ENCODE measurements at regions of chr19 and their contacts with region 1.

Region 1: DNA sequence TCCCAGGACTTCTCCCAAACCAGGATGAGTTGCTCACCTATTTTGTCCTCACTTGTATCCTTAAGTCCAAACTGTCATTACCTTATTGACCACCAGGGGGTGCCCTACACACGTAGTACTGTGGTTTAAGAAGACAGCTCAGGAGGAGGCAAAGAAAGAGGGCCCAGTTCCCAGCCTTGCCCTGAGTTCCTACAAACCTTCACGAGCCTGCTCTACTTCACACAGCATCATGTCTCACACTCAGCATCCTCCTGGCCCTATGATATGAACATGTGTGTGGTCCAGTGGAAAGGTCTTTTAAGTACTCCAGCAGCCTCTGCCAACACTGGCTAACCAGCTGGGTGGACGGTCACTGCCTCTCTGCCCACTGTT is 8.1 kb upstream of the ZNF784 start:
- DNase-seq: peak; percentile 62 to 95 (median 87)
- ATAC-seq: peak; percentile 43
- H3K4me3 ChIP-seq: no peak overlapping the region
- H3K4me3 Mint-ChIP-seq: peak overlapping the region; percentile 83
- H3K27ac ChIP-seq: no peak overlapping the region
- H3K27ac Mint-ChIP-seq: peak overlapping the region; percentile 55
- H3K4me1 ChIP-seq: peaks cover 49% of the 10 kb centered on the region
- H3K4me1 Mint-ChIP-seq: peaks cover 45% of the 10 kb centered on the region
- H3K27me3 ChIP-seq: no peaks in the 10 kb centered on the region
- H3K27me3 Mint-ChIP-seq: no peaks in the 10 kb centered on the region
- CTCF ChIP-seq: peak; percentile 65

Region 2: DNA sequence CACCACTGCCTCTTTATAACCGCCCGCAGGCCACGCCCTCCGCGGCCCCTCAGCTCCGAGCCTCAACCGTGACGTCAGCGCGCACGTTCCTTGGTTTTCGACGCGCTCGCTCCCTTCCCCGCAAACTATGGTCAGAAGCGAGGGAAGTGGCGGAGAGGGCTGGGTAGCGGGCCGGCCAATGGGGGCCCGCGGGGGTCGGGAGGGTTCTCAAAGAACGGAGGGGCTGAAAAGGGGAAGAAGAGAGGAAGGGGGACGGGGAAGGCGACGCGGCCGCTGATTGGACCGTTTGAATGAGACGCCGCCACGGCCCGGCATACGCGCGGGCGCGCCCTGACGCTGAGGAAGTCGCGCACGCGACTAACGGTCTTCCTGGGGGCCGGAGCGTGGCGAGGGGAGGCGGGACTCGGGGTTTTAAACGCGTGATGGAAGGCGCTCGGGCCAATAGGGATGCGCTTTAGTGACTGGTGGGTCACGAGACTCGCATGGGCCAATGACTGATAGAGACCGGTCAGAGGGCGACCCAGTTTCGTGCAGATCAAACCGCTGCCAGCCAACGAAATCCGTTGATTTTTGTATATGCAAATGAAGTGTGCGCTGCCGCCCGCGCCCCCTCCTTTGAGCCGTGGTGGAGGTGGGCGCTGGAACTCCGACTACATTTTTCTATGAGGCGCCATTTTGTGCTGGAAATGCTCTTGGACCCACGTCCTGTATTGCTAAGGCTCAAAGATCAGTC is 224.5 kb before region 1 on chr19:
- CTCF ChIA-PET with region 1: no interaction called
- POLR2A ChIA-PET with region 1: no interaction called
- intact Hi-C with region 1: loop called in 1 of 2 experiments (anchors 10 kb)
- DNase-seq: peak; percentile 91 to 99 (median 96)
- ATAC-seq: peak; percentile 92
- H3K4me3 ChIP-seq: peak overlapping the region; percentile 61
- H3K4me3 Mint-ChIP-seq: peak overlapping the region; percentile 94
- H3K27ac ChIP-seq: peak overlapping the region; percentile 96 to 100
- H3K27ac Mint-ChIP-seq: peak overlapping the region; percentile 99
- H3K4me1 ChIP-seq: peaks cover 30% of the 10 kb centered on the region
- H3K4me1 Mint-ChIP-seq: peaks cover 29% of the 10 kb centered on the region
- H3K27me3 ChIP-seq: no peaks in the 10 kb centered on the region
- H3K27me3 Mint-ChIP-seq: no peaks in the 10 kb centered on the region
- CTCF ChIP-seq: no peak

Region 3: GRCh38 chr19:55503502-55504251 is 128.8 kb before region 1 on chr19:
- CTCF ChIA-PET with region 1: interaction called, 24 read pairs
- POLR2A ChIA-PET with region 1: interaction called, 3 read pairs
- intact Hi-C with region 1: no loop called
- DNase-seq: peak; percentile 82 to 96 (median 91)
- ATAC-seq: peak; percentile 92
- H3K4me3 ChIP-seq: peak overlapping the region; percentile 64
- H3K4me3 Mint-ChIP-seq: peak overlapping the region; percentile 89
- H3K27ac ChIP-seq: peak overlapping the region in 1 of 2 donors; percentile 44
- H3K27ac Mint-ChIP-seq: peak overlapping the region; percentile 76
- H3K4me1 ChIP-seq: peaks cover 13% of the 10 kb centered on the region
- H3K4me1 Mint-ChIP-seq: peaks cover 12% of the 10 kb centered on the region
- H3K27me3 ChIP-seq: no peaks in the 10 kb centered on the region
- H3K27me3 Mint-ChIP-seq: peaks cover 7% of the 10 kb centered on the region
- CTCF ChIP-seq: peak; percentile 98

Region 4: GRCh38 chr19:55586976-55587668 is 45.3 kb before region 1 on chr19:
- CTCF ChIA-PET with region 1: interaction called, 19 read pairs
- POLR2A ChIA-PET with region 1: interaction called, 17 read pairs
- intact Hi-C with region 1: loop called in 1 of 2 experiments (anchors 1 kb)
- DNase-seq: peak; percentile 85 to 96 (median 91)
- ATAC-seq: peak; percentile 95
- H3K4me3 ChIP-seq: peak overlapping the region; percentile 46
- H3K4me3 Mint-ChIP-seq: peak overlapping the region; percentile 90
- H3K27ac ChIP-seq: no peak overlapping the region
- H3K27ac Mint-ChIP-seq: peak overlapping the region; percentile 71
- H3K4me1 ChIP-seq: peaks cover 29% of the 10 kb centered on the region
- H3K4me1 Mint-ChIP-seq: peaks cover 41% of the 10 kb centered on the region
- H3K27me3 ChIP-seq: no peaks in the 10 kb centered on the region
- H3K27me3 Mint-ChIP-seq: no peaks in the 10 kb centered on the region
- CTCF ChIP-seq: no peak

Region 5: GRCh38 chr19:55643348-55644176 is 11.1 kb after region 1 on chr19 and contains the start of gene ZNF581:
- CTCF ChIA-PET with region 1: interaction called, 16 read pairs
- POLR2A ChIA-PET with region 1: interaction called, 24 read pairs
- intact Hi-C with region 1: loop called in 1 of 2 experiments (anchors 1 kb)
- DNase-seq: peak; percentile 63 to 92 (median 74)
- ATAC-seq: peak; percentile 54
- H3K4me3 ChIP-seq: peak within 1 kb of the TSS; percentile 78
- H3K4me3 Mint-ChIP-seq: peak within 1 kb of the TSS; percentile 89
- H3K27ac ChIP-seq: peak within 1 kb of the TSS; percentile 71 to 78
- H3K27ac Mint-ChIP-seq: peak within 1 kb of the TSS; percentile 88
- H3K4me1 ChIP-seq: peaks cover 77% of the 10 kb centered on the region
- H3K4me1 Mint-ChIP-seq: peaks cover 54% of the 10 kb centered on the region
- H3K27me3 ChIP-seq: no peaks in the 10 kb centered on the region
- H3K27me3 Mint-ChIP-seq: no peaks in the 10 kb centered on the region
- CTCF ChIP-seq: no peak
- total RNA-seq, gene ZNF581: 23.1 to 24.7 TPM

Region 6: GRCh38 chr19:55809381-55810058 is 177.1 kb after region 1 on chr19:
- CTCF ChIA-PET with region 1: interaction called, 4 read pairs
- POLR2A ChIA-PET with region 1: no interaction called
- intact Hi-C with region 1: loop called in 1 of 2 experiments (anchors 5 kb)
- DNase-seq: peak in 5 of 14 experiments; percentile 0 to 60 (median 22)
- ATAC-seq: no peak
- H3K4me3 ChIP-seq: no peak overlapping the region
- H3K4me3 Mint-ChIP-seq: no peak overlapping the region
- H3K27ac ChIP-seq: no peak overlapping the region
- H3K27ac Mint-ChIP-seq: no peak overlapping the region
- H3K4me1 ChIP-seq: no peaks in the 10 kb centered on the region
- H3K4me1 Mint-ChIP-seq: no peaks in the 10 kb centered on the region
- H3K27me3 ChIP-seq: peaks cover 0 to 3% of the 10 kb centered on the region in 2 experiments
- H3K27me3 Mint-ChIP-seq: peaks cover 41% of the 10 kb centered on the region
- CTCF ChIP-seq: no peak